Activated CD4-positive, alpha-beta T cell treated with anti-CD3 and anti-CD28 coated beads for 36 hours (primary cell): ENCODE measurements at regions of chrX and their contacts with region 1.

Region 1: DNA sequence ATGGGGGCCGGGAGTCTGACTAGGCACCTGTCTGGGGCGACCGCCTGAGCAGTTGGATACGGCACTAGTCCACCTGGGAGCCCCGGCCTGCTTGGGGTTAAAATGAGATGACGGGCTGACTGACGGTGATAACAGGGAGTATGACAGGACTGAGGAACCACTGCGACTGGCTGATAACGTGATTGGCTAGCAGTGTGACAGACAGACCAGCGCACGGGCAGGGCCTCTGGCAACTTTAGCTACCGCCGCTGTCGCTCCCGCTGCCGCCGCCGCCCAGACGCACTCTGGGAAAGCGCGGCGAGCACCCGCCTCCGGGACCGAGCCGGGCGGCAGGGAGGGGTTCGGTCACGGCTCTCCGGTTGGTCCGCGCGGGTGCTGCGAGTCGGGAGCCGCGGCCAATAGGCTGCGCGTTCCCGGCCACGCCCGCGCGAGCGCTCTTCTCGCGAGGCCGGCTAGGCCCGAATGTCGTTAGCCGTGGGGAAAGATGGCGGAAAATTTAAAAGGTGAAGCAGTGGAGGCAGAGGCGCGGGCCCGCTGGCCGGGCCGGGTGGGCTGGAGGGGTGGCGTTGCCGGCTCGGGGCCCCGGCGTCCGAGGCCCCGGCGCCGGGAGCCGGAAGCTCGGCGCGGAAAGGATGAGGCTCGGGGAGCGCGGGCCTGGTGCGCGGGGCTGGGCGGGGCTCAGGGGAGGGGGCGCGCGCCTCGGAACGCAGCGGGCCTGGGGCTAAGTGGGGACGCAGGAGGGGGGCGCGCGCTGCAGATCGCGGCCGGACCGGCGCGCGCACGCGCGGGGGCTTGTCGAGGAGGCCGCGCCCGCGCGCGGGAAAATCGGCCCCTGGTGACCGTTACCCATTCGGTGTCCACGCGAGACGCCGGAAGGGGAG is at the start of gene SUV39H1:
- DNase-seq: peak; percentile 92
- ATAC-seq: peak; percentile 94
- H3K4me3 Mint-ChIP-seq: peak within 1 kb of the TSS; percentile 91
- H3K27ac Mint-ChIP-seq: peak within 1 kb of the TSS; percentile 92
- H3K4me1 Mint-ChIP-seq: peaks cover 19% of the 10 kb centered on the region
- H3K27me3 Mint-ChIP-seq: no peaks in the 10 kb centered on the region
- total RNA-seq, gene SUV39H1: 30.8 to 31.7 TPM

Region 2: GRCh38 chrX:48475774-48476577 is 220.6 kb before region 1 on chrX and contains the start of gene FTSJ1:
- CTCF ChIA-PET with region 1: no interaction called
- POLR2A ChIA-PET with region 1: no interaction called
- intact Hi-C with region 1: loop called in 1 of 2 experiments (anchors 5 kb)
- DNase-seq: peak; percentile 88
- ATAC-seq: peak; percentile 91
- H3K4me3 Mint-ChIP-seq: peak within 1 kb of the TSS; percentile 93
- H3K27ac Mint-ChIP-seq: peak within 1 kb of the TSS; percentile 90
- H3K4me1 Mint-ChIP-seq: peaks cover 36% of the 10 kb centered on the region
- H3K27me3 Mint-ChIP-seq: no peaks in the 10 kb centered on the region
- total RNA-seq, gene FTSJ1: 73.0 to 93.7 TPM

Region 3: GRCh38 chrX:48676106-48676892 is 20.2 kb before region 1 on chrX:
- CTCF ChIA-PET with region 1: no interaction called
- POLR2A ChIA-PET with region 1: interaction called, 8 read pairs
- intact Hi-C with region 1: loop called (anchors 1 kb)
- DNase-seq: peak; percentile 92
- ATAC-seq: peak; percentile 95
- H3K4me3 Mint-ChIP-seq: peak overlapping the region; percentile 90
- H3K27ac Mint-ChIP-seq: peak overlapping the region; percentile 91
- H3K4me1 Mint-ChIP-seq: peaks cover 19% of the 10 kb centered on the region
- H3K27me3 Mint-ChIP-seq: no peaks in the 10 kb centered on the region

Region 4: DNA sequence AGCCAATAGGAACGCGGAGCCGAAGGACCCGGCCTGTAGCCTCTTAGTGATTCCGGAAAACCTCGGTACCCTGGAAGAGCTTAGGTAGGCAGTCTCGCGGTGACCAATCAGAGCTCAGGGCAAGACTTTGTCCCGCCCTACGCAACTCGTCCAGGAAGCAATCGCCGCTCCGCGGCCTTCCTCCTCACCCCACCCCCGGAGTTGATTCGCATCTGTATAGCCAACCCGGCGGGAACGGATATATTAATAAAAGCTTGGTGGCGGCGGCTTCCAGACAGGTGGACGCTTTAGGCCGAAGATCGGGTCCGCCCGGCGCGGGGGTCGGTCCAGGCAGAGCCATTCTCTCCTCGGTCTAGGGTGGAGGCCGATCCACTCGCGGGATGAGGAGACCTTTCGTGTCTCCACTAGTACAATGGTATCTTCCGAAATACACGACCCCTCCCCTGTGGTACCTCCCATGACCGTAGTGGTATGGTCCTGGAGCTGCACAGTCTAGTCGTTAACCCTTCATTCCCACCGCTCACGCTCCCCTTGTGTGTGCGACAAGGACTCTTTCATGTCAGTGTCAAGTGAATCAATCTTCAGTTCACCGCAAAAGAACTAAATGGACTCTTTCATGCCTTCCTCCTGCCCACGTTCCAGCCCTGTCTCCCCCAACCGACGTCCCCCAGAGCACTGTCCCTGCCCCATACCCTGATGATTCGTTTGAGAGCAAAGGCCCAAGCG is 40.8 kb after region 1 on chrX:
- CTCF ChIA-PET with region 1: no interaction called
- POLR2A ChIA-PET with region 1: interaction called, 3 read pairs
- intact Hi-C with region 1: loop called (anchors 1 kb)
- DNase-seq: peak; percentile 92
- ATAC-seq: peak; percentile 96
- H3K4me3 Mint-ChIP-seq: peak overlapping the region; percentile 97
- H3K27ac Mint-ChIP-seq: peak overlapping the region; percentile 99
- H3K4me1 Mint-ChIP-seq: peaks cover 20% of the 10 kb centered on the region
- H3K27me3 Mint-ChIP-seq: no peaks in the 10 kb centered on the region

Region 5: DNA sequence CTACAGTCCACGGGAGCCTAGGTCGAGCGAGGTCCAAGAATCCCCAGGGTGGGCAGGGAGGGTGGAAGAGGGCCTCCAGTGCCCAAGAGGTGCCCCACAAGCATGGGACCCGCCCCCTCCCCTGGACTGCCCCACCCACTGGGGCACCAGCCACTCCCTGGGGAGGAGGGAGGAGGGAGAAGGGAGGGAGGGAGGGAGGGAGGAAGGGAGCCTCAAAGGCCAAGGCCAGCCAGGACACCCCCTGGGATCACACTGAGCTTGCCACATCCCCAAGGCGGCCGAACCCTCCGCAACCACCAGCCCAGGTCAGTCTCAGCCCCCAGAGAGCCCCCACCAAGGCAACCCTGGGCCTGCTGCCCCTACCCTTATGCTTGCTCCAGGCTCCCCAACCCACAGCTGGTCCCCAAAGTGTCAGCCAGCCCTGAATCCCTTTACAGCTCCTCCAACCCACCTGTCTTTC is 89.8 kb after region 1 on chrX and contains the start of gene GATA1:
- CTCF ChIA-PET with region 1: no interaction called
- POLR2A ChIA-PET with region 1: no interaction called
- intact Hi-C with region 1: no loop called
- DNase-seq: no peak
- ATAC-seq: no peak
- H3K4me3 Mint-ChIP-seq: no peak within 1 kb of the TSS
- H3K27ac Mint-ChIP-seq: no peak within 1 kb of the TSS
- H3K4me1 Mint-ChIP-seq: peaks cover 8% of the 10 kb centered on the region
- H3K27me3 Mint-ChIP-seq: peaks cover 7% of the 10 kb centered on the region
- total RNA-seq, gene GATA1: not detected

Region 6: DNA sequence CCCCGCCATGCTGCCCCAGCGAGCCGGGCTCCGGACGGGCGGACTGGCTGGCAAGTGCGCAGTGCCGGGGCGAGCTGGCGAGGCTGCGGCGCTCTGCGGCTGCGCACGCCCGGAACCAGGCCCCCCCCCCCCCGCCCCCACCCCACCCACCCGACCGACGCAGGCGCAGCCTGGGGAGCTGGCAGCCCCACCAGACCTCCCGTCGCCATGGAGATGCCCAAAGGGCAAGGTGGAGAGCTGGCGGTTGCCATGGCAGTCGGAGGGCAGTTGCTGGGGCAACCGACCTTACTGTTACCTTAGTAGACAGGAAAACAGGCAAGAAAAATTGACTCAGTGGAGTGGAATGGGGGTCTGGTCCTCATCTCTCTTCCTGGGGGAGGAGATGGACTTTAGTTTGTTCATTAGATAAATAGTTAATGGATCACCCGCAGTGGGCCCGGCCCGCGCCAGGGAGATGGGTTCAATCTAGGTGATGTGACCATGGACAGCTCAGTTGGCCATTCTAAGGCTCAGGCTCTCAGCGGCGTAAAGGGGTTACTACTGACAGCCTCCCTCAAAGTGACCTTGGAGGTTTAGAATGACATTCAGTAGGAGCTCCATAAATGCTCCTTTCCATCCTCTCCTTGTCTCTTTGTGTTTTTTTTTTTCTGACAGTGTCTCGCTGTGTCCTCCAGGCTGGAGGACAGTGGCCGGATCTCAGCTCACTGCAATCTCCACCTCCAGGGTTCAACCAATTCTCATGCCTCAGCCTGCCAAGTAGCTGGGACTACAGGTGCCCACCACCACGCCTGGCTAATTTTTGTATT is 139.2 kb after region 1 on chrX and contains the start of gene PCSK1N:
- CTCF ChIA-PET with region 1: no interaction called
- POLR2A ChIA-PET with region 1: no interaction called
- intact Hi-C with region 1: no loop called
- DNase-seq: peak; percentile 38
- ATAC-seq: peak; percentile 28
- H3K4me3 Mint-ChIP-seq: peak within 1 kb of the TSS; percentile 75
- H3K27ac Mint-ChIP-seq: peak within 1 kb of the TSS; percentile 6
- H3K4me1 Mint-ChIP-seq: peaks cover 13% of the 10 kb centered on the region
- H3K27me3 Mint-ChIP-seq: peaks cover 26% of the 10 kb centered on the region
- total RNA-seq, gene PCSK1N: 1.3 TPM

Region 7: DNA sequence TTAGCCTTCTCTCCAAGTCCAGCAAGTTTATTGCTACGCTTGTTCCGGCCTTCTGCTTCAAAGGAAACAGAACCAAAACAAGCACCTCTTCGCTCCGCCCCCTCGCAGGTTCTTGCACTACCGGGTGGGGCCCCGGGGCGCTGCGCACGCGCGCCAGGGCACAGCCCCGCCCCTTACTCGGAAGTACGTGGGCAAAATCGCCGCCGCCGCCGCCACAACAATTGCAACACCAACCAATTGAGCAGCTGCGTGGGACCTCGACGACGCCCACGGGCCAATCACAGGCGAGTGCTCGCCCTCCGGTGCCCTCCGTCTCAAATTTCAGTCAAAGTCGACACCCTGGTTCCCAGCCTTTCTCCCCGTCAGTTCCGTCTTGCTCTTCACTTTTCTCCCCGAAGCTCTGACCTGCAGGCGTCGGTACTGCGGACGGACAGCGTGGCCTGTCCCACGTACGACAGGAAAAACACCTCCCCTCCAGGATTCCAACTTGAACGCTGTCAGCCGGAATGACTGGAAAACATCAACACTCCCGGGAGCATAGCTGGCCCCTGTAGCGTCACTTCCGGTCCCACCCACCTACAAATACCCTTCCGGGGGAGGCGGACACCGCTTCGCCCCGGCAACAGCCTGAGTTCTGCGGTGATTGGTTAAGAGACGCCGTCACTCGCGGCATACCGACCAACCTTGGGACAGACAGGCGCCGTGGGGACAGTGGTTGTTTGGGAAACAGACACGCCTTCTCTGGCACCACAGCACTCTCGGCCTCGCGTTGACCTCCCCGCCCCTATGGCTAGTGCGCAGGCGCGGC is 261.5 kb after region 1 on chrX:
- CTCF ChIA-PET with region 1: no interaction called
- POLR2A ChIA-PET with region 1: no interaction called
- intact Hi-C with region 1: loop called (anchors 1 to 2 kb)
- DNase-seq: peak; percentile 95
- ATAC-seq: peak; percentile 92
- H3K4me3 Mint-ChIP-seq: peak overlapping the region; percentile 93
- H3K27ac Mint-ChIP-seq: peak overlapping the region; percentile 100
- H3K4me1 Mint-ChIP-seq: peaks cover 28% of the 10 kb centered on the region
- H3K27me3 Mint-ChIP-seq: no peaks in the 10 kb centered on the region